ENCODE measurements at regions of chr1 and their contacts with region 1.

Region 1: DNA sequence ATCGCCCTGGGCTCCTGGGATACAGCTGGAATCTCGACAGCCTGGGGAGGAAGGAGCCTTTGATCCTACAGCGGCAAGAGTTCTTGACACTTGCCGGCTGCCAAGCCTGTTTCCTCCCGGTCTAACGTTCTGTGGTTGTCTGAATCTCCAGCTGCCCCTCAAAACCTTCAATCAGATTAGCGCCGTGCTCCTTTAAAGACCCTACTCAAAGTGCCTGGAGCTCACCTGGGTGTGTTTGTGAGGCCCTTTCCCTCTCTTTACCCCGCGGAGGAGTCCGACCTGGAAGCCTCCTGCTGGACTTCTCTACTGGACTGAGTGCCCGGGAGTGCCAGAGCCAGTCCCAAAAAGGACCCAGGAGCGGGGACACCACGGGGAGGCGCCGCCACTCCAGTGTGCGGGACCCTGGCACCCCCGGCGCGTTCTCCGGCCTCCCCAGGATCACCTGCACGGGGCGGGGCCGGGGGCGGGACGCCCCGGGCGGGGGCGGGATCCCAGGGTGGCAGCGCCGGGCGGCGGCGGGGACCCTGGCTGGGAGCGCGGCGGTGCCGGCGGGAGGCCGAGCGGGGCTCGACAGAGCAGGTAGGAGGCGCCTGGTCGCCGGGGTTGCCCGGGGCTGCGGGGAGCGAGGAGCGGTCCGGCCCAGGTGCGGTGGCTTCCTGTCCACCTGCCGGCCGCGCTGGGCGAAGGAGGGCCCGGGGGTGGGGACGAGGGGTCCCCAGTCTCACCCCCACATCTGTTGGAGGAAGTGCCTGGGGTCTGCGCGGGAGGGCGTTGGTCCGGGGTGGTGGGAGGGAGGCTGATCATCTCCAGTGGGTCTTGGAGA is at the start of gene NCMAP:
- DNase-seq: peak in 1 of 5 donors; percentile 23
- ATAC-seq: peak in 3 of 4 donors; percentile 38 to 72 (median 61)
- H3K4me3 ChIP-seq: peak within 1 kb of the TSS in 9 of 12 donors; percentile 23 to 51 (median 35)
- H3K27ac ChIP-seq: no peak within 1 kb of the TSS
- H3K4me1 ChIP-seq: peaks cover 0 to 16% (median 0%) of the 10 kb centered on the region in 12 donors
- H3K27me3 ChIP-seq: peaks cover 0 to 43% (median 17%) of the 10 kb centered on the region in 9 donors
- CTCF ChIP-seq: peak in 1 of 12 donors; percentile 22
- POLR2A ChIP-seq: no peak
- total RNA-seq, gene NCMAP: 0.08 to 0.29 (median 0.17) TPM in 5 of 9 donors, not detected in the others

Region 2: GRCh38 chr1:24508911-24509310 is 46.9 kb before region 1 on chr1:
- intact Hi-C with region 1: loop called in 1 of 10 experiments (anchors 2 kb)
- DNase-seq: no peak
- ATAC-seq: no peak
- H3K4me3 ChIP-seq: no peak overlapping the region
- H3K27ac ChIP-seq: no peak overlapping the region
- H3K4me1 ChIP-seq: peaks cover 0 to 6% (median 0%) of the 10 kb centered on the region in 12 donors
- H3K27me3 ChIP-seq: no peaks in the 10 kb centered on the region
- CTCF ChIP-seq: no peak
- POLR2A ChIP-seq: no peak